ENCODE measurements at regions of chr14 and their contacts with region 1.

Region 1: DNA sequence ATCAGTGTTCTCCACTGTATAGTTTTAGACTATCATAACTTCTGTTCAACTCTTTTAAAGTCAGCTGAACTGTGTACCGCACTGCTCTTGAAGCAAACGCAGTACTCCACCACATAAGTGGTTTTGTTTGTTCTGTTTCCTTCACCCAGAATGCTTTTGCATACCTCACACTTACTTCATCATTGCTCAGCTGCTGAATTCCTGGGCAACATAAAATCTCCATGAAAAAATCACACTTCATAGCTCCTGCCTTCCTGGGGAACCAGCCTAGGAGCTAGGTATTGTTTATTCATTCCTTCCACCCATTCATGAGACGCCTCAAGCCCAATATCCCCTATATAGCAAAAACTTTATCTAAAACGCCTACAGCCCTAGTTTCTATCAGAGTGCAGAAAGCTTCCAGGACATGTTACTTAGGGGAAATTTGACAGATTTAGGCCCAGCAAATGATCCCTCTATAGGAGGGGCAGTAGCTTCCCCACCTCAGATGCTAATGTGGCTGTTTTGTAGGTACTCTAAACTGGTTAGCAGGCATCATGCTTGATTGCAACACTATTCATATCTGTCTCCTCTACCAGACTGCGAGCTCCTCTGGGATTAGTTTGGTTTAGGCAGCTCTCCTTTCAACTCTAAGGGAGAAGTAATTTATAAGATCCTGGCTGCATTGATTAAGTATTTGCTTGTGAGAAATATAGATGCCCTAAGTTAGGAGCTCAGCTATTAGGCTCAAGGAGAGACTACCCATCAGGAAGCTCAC is 44.5 kb downstream of the LRRC9 start:
- DNase-seq: no peak
- H3K4me3 ChIP-seq: no peak overlapping the region
- H3K27ac ChIP-seq: no peak overlapping the region
- H3K4me1 ChIP-seq: no peaks in the 10 kb centered on the region
- H3K27me3 ChIP-seq: no peaks in the 10 kb centered on the region
- CTCF ChIP-seq: no peak
- EP300 ChIP-seq: no peak
- POLR2A ChIP-seq: no peak
- RAD21 ChIP-seq: no peak

Region 2: DNA sequence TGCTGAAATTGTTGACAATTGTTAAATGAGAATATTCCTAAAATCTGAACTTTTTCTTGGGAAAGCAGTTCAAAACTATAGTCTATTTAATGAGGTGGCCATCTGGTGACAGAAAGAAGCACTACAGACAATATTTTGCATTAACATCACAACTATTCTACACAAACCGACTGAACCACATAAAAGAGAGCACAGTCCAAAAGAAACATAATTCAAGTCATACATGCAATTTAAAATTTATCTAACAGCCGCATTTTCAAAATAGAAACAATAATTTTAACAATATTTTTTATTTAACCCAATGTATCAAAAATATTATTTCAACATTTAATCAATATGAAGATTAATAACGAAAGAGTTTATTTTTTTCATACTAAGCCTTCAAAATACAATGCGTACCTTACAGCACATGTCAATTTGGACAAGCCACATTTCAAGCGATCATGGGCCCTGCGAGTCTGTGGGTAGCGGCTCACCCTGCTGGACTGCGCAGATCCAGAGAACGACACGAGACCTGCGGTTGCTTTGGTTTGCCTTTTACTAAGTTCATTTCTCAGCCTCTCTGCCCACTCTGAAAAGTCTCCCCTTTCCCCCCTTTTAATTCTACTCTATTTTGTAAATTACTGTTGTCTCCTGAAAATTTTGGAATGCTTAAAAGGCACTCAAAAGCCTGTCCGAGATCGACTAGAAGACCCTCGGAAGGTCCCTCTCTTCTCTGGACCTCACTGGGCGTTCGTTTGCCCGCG is 45.4 kb before region 1 on chr14:
- CTCF ChIA-PET with region 1: interaction called, 10 read pairs
- POLR2A ChIA-PET with region 1: interaction called, 4 read pairs
- DNase-seq: no peak
- H3K4me3 ChIP-seq: peak overlapping the region; percentile 67 to 87 (median 80)
- H3K27ac ChIP-seq: peak overlapping the region; percentile 80; the same call in 1 of the 2 replicates
- H3K4me1 ChIP-seq: peaks cover 0 to 4% (median 1%) of the 10 kb centered on the region in 4 experiments; a peak in 3 of 7 replicates
- H3K27me3 ChIP-seq: no peaks in the 10 kb centered on the region
- CTCF ChIP-seq: peak in 2 of 3 experiments; percentile 17 to 27; a peak in 2 of 4 replicates
- EP300 ChIP-seq: no peak
- POLR2A ChIP-seq: no peak
- RAD21 ChIP-seq: peak in 1 of 2 experiments; percentile 32; a peak in 2 of 4 replicates

Region 3: GRCh38 chr14:59986556-59987059 is 22.2 kb after region 1 on chr14:
- CTCF ChIA-PET with region 1: interaction called, 47 read pairs
- POLR2A ChIA-PET with region 1: no interaction called
- DNase-seq: no peak
- H3K4me3 ChIP-seq: no peak overlapping the region
- H3K27ac ChIP-seq: no peak overlapping the region
- H3K4me1 ChIP-seq: no peaks in the 10 kb centered on the region
- H3K27me3 ChIP-seq: no peaks in the 10 kb centered on the region
- CTCF ChIP-seq: no peak
- EP300 ChIP-seq: no peak
- POLR2A ChIP-seq: no peak
- RAD21 ChIP-seq: no peak

Region 4: DNA sequence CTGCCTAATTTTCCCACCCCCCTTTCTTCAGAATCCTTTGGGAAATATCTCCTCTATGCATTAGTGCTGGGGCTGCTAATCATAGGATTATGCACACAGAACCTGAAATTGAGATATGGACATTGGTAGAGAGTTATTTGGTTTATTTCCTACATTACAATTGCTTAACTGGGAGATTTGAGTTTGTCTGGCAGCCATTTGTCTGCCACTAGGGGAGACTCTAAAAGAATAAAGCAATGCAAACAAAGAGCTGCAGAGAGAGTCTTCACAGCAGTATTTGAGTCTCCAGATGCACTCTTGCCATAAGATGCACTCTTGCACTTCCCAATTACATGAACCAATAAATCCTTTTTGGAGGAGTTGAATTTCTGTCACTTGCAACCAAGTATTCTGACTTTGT is 115.3 kb after region 1 on chr14:
- CTCF ChIA-PET with region 1: interaction called, 10 read pairs
- POLR2A ChIA-PET with region 1: no interaction called
- DNase-seq: no peak
- H3K4me3 ChIP-seq: no peak overlapping the region
- H3K27ac ChIP-seq: no peak overlapping the region
- H3K4me1 ChIP-seq: no peaks in the 10 kb centered on the region; a peak in 1 of 7 replicates
- H3K27me3 ChIP-seq: no peaks in the 10 kb centered on the region
- CTCF ChIP-seq: peak in 1 of 3 experiments; percentile 25; a peak in 1 of 4 replicates
- EP300 ChIP-seq: no peak
- POLR2A ChIP-seq: no peak
- RAD21 ChIP-seq: 0 out of 4 replicates have a peak, but pooled peaks of 1 of the 2 experiments have one; percentile 4

Region 5: GRCh38 chr14:60164712-60165546 is 200.5 kb after region 1 on chr14 and contains the start of gene DHRS7:
- CTCF ChIA-PET with region 1: interaction called, 12 read pairs
- POLR2A ChIA-PET with region 1: no interaction called
- DNase-seq: peak; percentile 21 to 79
- H3K4me3 ChIP-seq: peak within 1 kb of the TSS; percentile 73 to 91 (median 77)
- H3K27ac ChIP-seq: no peak within 1 kb of the TSS
- H3K4me1 ChIP-seq: peaks cover 4 to 13% (median 5%) of the 10 kb centered on the region in 4 experiments; a peak in 3 of 7 replicates
- H3K27me3 ChIP-seq: no peaks in the 10 kb centered on the region; a peak in 2 of 7 replicates
- CTCF ChIP-seq: peak in 2 of 3 experiments; percentile 14 to 16; a peak in 2 of 4 replicates
- EP300 ChIP-seq: no peak
- POLR2A ChIP-seq: peak in 1 of 2 experiments; percentile 61; a peak in 2 of 3 replicates
- RAD21 ChIP-seq: peak; percentile 7 to 45; a peak in 3 of 4 replicates
- total RNA-seq, gene DHRS7: 26.1 and 27.5 TPM in 2 replicates

Region 6: GRCh38 chr14:60184146-60184904 is 219.9 kb after region 1 on chr14:
- CTCF ChIA-PET with region 1: interaction called, 80 read pairs
- POLR2A ChIA-PET with region 1: no interaction called
- DNase-seq: no peak
- H3K4me3 ChIP-seq: peak overlapping the region in 1 of 4 experiments; percentile 42; a peak in 2 of 8 replicates
- H3K27ac ChIP-seq: no peak overlapping the region
- H3K4me1 ChIP-seq: peaks cover 0 to 3% (median 0%) of the 10 kb centered on the region in 4 experiments; a peak in 1 of 7 replicates
- H3K27me3 ChIP-seq: no peaks in the 10 kb centered on the region
- CTCF ChIP-seq: peak in 2 of 3 experiments; percentile 40 to 59; a peak in 2 of 4 replicates
- EP300 ChIP-seq: no peak
- POLR2A ChIP-seq: no peak
- RAD21 ChIP-seq: peak; percentile 83 to 87

Measured in H1 (cell line).